ENCODE measurements at regions of chr11 and their contacts with region 1.

Region 1: DNA sequence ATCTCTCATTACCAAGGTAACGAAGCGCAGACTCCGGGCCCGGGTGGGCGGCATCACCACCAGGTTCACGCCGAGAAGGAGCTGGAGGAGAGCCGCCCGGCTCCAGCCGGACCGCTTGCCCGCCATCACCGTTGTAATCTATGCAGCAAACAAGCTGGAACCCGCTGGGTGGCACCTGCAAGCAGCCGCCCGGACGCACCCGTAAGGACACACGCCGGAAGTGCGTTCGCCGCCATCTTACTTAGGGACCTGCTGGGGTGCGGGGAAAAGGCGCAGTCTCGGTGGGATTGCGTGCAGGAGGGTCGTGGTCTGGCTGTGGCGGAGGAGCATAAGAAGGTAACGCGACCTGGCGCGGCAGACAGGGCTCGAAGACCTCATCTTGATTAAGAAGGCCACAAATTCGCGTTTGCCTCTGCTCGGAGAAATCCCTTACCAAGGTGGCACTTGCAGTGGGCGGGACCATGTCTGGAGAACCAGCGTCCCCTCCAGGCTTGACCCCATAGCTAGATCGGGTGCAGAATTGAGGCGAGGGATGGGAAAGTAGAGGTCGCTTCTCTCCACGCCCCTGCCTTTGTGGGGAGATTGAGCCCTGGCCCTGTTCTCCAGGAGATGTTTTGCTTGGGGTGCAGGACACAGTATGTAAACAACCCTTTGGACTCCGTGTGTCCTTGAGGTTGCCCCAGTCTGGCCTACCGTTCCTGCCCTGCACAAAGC is at the start of gene ACP2:
- DNase-seq: peak; percentile 82
- H3K4me3 Mint-ChIP-seq: peak within 1 kb of the TSS; percentile 100
- H3K27ac Mint-ChIP-seq: peak within 1 kb of the TSS; percentile 98
- H3K4me1 Mint-ChIP-seq: peaks cover 27% of the 10 kb centered on the region
- H3K27me3 Mint-ChIP-seq: no peaks in the 10 kb centered on the region
- total RNA-seq, gene ACP2: 31.8 and 33.8 TPM in 2 replicates

Region 2: GRCh38 chr11:46936138-46937110 is 312.4 kb before region 1 on chr11 and contains the start of gene CSTPP1:
- intact Hi-C with region 1: loop called (anchors 1 kb)
- DNase-seq: peak; percentile 89
- H3K4me3 Mint-ChIP-seq: peak within 1 kb of the TSS; percentile 92
- H3K27ac Mint-ChIP-seq: peak within 1 kb of the TSS; percentile 88
- H3K4me1 Mint-ChIP-seq: peaks cover 14% of the 10 kb centered on the region
- H3K27me3 Mint-ChIP-seq: peaks cover 7% of the 10 kb centered on the region
- total RNA-seq, gene CSTPP1: 15.1 and 16.7 TPM in 2 replicates

Region 3: DNA sequence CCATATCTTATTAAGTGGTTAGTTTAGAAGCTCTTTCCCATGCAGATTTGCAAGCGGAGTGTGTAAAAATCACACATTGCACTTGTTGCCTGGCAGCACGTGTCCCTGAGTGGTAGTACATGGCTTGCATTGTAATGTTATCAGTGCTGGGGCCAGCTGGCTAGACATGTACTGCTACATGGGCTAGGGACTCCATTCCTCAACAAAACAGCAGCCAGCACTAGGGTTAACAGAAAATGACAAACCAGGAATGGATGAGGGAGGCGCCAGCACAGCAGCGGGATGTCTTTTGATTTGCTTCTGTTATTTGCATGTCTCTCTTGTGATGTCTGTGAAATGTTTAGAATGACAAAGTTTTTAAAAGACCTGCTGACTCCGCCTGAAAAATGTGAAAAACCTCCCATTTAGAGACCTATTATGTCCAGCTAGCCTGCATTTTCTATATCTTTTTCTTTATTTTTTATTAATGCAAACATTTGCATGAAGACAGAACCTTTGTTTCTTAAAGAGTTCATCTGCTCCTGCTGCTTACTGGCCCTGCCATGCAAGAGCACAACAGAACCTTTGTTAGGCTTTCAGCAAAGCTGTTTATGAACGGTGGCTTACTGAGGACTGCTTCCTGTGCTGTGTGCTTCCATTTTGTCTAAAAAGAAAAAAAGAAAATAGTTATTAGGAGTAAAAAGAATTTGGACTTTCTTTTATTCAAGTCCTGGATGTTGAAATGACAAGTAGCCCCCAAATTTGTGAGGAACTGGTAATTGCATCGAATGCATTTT is 271.6 kb before region 1 on chr11:
- intact Hi-C with region 1: no loop called
- DNase-seq: no peak
- H3K4me3 Mint-ChIP-seq: no peak overlapping the region
- H3K27ac Mint-ChIP-seq: no peak overlapping the region
- H3K4me1 Mint-ChIP-seq: peaks cover 16% of the 10 kb centered on the region
- H3K27me3 Mint-ChIP-seq: no peaks in the 10 kb centered on the region

Region 4: DNA sequence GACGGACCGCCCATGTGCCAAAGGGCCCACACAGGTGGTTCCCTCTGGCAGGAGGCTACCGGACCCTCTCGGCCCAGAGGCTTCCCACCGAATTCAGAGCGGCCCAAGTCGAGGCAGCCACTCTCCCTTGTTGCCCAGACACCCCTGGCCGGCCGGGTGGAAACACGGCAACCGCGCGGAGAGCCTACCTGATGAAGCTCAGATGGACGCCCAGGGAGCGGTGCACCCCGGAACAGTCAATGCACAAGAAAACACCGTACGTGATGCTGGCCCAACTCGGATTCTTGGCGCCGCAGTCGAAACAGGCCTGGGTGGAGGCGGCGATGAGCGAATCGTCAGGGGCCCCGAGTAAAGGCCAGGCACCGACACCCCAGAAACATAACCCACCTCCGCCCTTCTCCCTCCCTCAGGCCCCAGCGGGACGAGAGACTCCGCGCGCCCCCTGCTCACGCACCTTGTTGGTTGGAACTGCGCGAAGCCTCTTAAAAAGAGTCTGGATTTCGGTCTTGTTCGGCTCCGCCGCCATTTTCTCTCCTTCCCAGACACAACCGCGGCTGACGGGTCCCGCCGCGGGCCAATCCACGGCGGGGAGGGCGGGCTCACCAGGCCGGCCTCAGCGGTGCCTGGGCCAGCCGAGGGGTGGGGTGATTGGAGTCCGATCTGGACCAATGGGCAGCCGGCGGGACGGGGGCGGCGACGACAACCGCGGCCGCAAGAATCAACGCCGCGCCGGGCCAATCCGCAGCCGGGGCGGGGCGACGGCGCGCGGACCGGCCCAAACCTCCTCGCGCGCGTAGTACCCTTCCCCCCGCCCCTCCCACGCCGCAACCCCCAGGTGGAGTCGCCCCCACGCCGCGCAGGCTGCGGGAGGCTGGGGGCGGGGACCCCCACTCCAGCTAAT is 72.2 kb before region 1 on chr11 and contains the start of gene ARFGAP2:
- intact Hi-C with region 1: loop called (anchors 1 kb)
- DNase-seq: peak; percentile 96
- H3K4me3 Mint-ChIP-seq: peak within 1 kb of the TSS; percentile 97
- H3K27ac Mint-ChIP-seq: peak within 1 kb of the TSS; percentile 100
- H3K4me1 Mint-ChIP-seq: peaks cover 36% of the 10 kb centered on the region
- H3K27me3 Mint-ChIP-seq: no peaks in the 10 kb centered on the region
- total RNA-seq, gene ARFGAP2: 111 and 116 TPM in 2 replicates

Region 5: GRCh38 chr11:47302853-47303252 is 54.0 kb after region 1 on chr11:
- intact Hi-C with region 1: loop called (anchors 2 kb)
- DNase-seq: no peak
- H3K4me3 Mint-ChIP-seq: no peak overlapping the region
- H3K27ac Mint-ChIP-seq: peak overlapping the region; percentile 73
- H3K4me1 Mint-ChIP-seq: peaks cover 10% of the 10 kb centered on the region
- H3K27me3 Mint-ChIP-seq: no peaks in the 10 kb centered on the region

Region 6: GRCh38 chr11:47394322-47395222 is 145.8 kb after region 1 on chr11:
- intact Hi-C with region 1: loop called (anchors 1 kb)
- DNase-seq: peak; percentile 53
- H3K4me3 Mint-ChIP-seq: no peak overlapping the region
- H3K27ac Mint-ChIP-seq: peak overlapping the region; percentile 87
- H3K4me1 Mint-ChIP-seq: peaks cover 10% of the 10 kb centered on the region
- H3K27me3 Mint-ChIP-seq: no peaks in the 10 kb centered on the region

Region 7: DNA sequence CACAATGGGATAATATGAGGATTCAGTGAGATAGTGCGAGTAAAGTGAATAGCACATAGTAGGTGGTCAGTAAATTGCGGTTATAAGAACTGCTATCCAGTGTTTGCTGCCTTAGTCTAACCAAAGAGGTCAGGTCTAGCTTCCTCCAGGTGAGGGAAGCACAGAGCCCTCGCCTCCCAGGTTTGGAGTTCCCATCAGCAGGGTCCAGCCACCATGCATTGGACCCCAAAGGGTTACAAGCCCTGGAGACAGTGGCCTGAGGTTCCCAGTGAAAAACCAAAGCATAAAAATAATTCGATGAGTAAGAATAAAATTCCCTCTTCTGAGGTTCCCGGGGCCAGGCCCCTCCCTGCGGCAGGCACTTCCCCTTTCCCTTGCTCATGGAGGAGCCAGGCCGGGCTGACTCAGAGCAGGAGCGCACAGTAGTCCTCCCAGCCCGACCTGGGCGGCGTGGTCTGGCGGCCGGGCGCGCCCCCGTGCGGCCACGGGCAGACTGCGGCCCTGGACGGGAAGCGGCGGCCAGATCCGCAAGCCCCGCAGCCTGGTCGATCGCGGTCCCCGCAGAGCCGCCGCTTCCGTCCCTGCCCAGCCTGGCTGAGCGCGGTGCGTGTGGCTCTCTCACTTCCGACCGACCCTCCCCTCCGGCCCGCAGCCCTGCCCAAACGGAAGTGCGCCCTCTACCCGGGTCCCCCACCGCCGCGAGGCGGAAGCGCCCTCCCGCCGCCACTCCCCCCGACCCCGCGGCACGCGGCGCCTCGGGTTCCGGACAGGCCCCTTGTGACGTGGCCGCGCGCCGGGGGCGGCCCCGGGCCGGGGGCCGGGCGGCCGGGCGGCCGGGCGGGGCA is 159.1 kb after region 1 on chr11 and contains the start of gene SLC39A13:
- intact Hi-C with region 1: loop called (anchors 1 kb)
- DNase-seq: peak; percentile 93
- H3K4me3 Mint-ChIP-seq: peak within 1 kb of the TSS; percentile 94
- H3K27ac Mint-ChIP-seq: peak within 1 kb of the TSS; percentile 92
- H3K4me1 Mint-ChIP-seq: peaks cover 21% of the 10 kb centered on the region
- H3K27me3 Mint-ChIP-seq: no peaks in the 10 kb centered on the region
- total RNA-seq, gene SLC39A13: 15.5 and 16.2 TPM in 2 replicates